ENCODE measurements at regions of chr18 and their contacts with region 1.

Region 1: DNA sequence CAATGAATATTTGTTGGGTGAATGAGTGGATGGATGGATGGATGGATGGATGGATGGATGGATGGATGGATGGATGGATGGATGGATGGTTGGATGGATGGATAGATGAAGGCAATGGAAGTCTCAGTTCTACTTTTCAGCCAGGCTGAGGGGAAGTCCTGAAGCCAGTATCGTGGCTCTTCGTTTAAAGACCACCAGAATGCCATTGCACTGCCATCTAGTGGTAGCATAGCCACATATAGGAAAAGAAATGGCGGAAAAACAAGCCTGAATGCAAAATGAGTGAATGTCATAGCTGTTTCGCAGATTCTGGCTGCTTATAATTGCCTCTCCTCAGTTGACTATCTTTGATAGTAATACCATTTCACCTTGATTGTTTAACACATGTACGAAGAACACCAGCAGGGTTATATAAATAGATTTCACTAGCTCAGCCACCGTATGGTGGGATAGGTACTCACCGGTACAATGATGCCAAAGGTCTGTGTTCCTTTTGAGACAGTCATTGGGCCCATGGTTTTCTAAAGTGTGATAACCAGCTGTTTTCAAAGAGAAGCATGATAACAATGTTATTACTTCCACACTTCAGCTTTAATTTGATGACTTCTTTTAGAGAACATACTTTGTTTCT is 62.3 kb upstream of the GREB1L start:
- DNase-seq: peak; percentile 66
- ATAC-seq: peak; percentile 17
- H3K4me3 ChIP-seq: no peak overlapping the region
- H3K4me3 Mint-ChIP-seq: no peak overlapping the region
- H3K27ac ChIP-seq: no peak overlapping the region
- H3K27ac Mint-ChIP-seq: no peak overlapping the region
- H3K4me1 ChIP-seq: no peaks in the 10 kb centered on the region
- H3K4me1 Mint-ChIP-seq: no peaks in the 10 kb centered on the region
- H3K27me3 ChIP-seq: no peaks in the 10 kb centered on the region
- H3K27me3 Mint-ChIP-seq: no peaks in the 10 kb centered on the region
- CTCF ChIP-seq: peak; percentile 77

Region 2: DNA sequence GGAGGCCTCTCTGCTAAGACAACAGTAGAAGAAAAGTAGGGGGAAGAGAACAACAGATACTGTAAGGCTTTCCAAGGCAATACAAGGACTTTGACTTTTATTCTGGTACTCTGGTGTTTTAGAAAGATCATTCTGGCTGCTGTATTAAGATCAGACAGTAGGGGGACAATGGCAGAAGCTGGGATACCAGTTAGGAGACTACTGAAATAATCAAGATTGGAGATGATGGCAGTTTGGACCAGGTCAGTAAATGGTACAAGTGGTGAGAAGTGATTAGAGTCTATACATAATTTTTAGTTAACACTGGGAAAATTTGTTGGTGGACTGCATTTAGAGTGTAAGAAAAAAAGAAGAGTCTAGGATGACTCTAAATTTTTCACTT is 207.8 kb before region 1 on chr18:
- CTCF ChIA-PET with region 1: interaction called, 3 read pairs
- POLR2A ChIA-PET with region 1: no interaction called
- intact Hi-C with region 1: loop called (anchors 2 kb)
- DNase-seq: peak; percentile 27
- ATAC-seq: no peak
- H3K4me3 ChIP-seq: no peak overlapping the region
- H3K4me3 Mint-ChIP-seq: no peak overlapping the region
- H3K27ac ChIP-seq: no peak overlapping the region
- H3K27ac Mint-ChIP-seq: no peak overlapping the region
- H3K4me1 ChIP-seq: no peaks in the 10 kb centered on the region
- H3K4me1 Mint-ChIP-seq: no peaks in the 10 kb centered on the region
- H3K27me3 ChIP-seq: no peaks in the 10 kb centered on the region
- H3K27me3 Mint-ChIP-seq: no peaks in the 10 kb centered on the region
- CTCF ChIP-seq: peak; percentile 55

Region 3: GRCh38 chr18:21099442-21099841 is 80.3 kb before region 1 on chr18:
- CTCF ChIA-PET with region 1: no interaction called
- POLR2A ChIA-PET with region 1: no interaction called
- intact Hi-C with region 1: no loop called
- DNase-seq: peak; percentile 66
- ATAC-seq: peak; percentile 85
- H3K4me3 ChIP-seq: peak overlapping the region in 1 of 5 experiments; percentile 27
- H3K4me3 Mint-ChIP-seq: peak overlapping the region; percentile 67
- H3K27ac ChIP-seq: peak overlapping the region; percentile 52 to 75
- H3K27ac Mint-ChIP-seq: peak overlapping the region; percentile 79
- H3K4me1 ChIP-seq: peaks cover 20 to 63% of the 10 kb centered on the region in 2 donors
- H3K4me1 Mint-ChIP-seq: peaks cover 72% of the 10 kb centered on the region
- H3K27me3 ChIP-seq: no peaks in the 10 kb centered on the region
- H3K27me3 Mint-ChIP-seq: no peaks in the 10 kb centered on the region
- CTCF ChIP-seq: no peak

Region 4: DNA sequence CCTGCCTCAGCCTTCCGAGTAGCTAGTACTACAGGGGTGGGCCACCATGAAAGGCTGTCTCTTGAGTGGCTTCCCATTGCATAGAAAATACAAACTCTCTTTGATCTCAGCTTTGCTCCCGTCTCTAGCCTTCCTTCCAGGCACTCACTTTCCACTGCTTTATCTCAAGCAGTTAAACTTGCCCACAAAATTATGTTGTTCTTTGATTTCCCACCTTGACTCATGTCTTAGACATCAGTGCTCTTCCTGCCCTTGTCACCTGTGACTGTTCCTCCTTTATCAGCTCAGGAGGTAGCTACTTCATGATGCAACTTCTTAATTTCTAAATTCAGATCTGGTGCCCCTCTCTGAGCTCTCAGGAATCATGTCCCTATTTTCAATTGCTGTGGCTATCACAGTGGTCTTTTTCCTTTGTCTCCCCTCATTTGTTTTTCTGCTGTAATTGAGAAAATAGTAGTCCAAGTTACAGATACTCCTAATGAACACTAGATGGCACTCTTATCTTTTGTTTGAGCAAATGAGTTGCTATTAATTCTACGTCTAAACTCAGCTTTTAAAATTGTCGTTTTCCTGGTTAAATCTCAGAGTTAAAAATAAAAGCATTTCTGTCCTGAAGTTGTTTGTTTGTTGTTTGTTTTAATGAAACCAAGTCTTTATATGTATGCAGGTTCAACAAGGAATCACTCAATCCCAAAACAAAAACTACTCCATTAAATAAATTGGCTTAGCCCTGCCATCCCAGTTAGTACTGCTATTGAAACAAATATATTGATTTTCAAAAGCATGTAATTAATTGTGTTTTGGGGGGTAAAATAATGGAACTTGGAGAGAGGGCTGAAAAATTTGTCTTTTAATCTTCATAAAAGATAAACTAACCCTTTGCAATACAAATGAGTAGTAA is 15.4 kb after region 1 on chr18:
- CTCF ChIA-PET with region 1: interaction called, 28 read pairs
- POLR2A ChIA-PET with region 1: no interaction called
- intact Hi-C with region 1: no loop called
- DNase-seq: peak; percentile 56
- ATAC-seq: no peak
- H3K4me3 ChIP-seq: no peak overlapping the region
- H3K4me3 Mint-ChIP-seq: no peak overlapping the region
- H3K27ac ChIP-seq: no peak overlapping the region
- H3K27ac Mint-ChIP-seq: no peak overlapping the region
- H3K4me1 ChIP-seq: no peaks in the 10 kb centered on the region
- H3K4me1 Mint-ChIP-seq: no peaks in the 10 kb centered on the region
- H3K27me3 ChIP-seq: peaks cover 0 to 3% (median 0%) of the 10 kb centered on the region in 4 experiments
- H3K27me3 Mint-ChIP-seq: peaks cover 13% of the 10 kb centered on the region
- CTCF ChIP-seq: peak; percentile 86

Region 5: GRCh38 chr18:22005191-22005841 is 825.6 kb after region 1 on chr18:
- CTCF ChIA-PET with region 1: no interaction called
- POLR2A ChIA-PET with region 1: no interaction called
- intact Hi-C with region 1: no loop called
- DNase-seq: no peak
- ATAC-seq: no peak
- H3K4me3 ChIP-seq: no peak overlapping the region
- H3K4me3 Mint-ChIP-seq: no peak overlapping the region
- H3K27ac ChIP-seq: no peak overlapping the region
- H3K27ac Mint-ChIP-seq: no peak overlapping the region
- H3K4me1 ChIP-seq: no peaks in the 10 kb centered on the region
- H3K4me1 Mint-ChIP-seq: no peaks in the 10 kb centered on the region
- H3K27me3 ChIP-seq: no peaks in the 10 kb centered on the region
- H3K27me3 Mint-ChIP-seq: no peaks in the 10 kb centered on the region
- CTCF ChIP-seq: no peak

Measured in B cell (primary cell).